ENCODE measurements at regions of chr5 and their contacts with region 1.

Region 1: GRCh38 chr5:75006865-75007822 is 45.2 kb downstream of the GCNT4 start:
- DNase-seq: peak; percentile 81
- ATAC-seq: peak; percentile 96
- H3K4me3 ChIP-seq: no peak overlapping the region
- H3K27ac ChIP-seq: peak overlapping the region; percentile 94
- H3K4me1 ChIP-seq: peaks cover 8% of the 10 kb centered on the region; the same call in 1 of the 2 replicates
- H3K27me3 ChIP-seq: no peaks in the 10 kb centered on the region
- CTCF ChIP-seq: no peak
- POLR2A ChIP-seq: no peak
- RAD21 ChIP-seq: no peak

Region 2: DNA sequence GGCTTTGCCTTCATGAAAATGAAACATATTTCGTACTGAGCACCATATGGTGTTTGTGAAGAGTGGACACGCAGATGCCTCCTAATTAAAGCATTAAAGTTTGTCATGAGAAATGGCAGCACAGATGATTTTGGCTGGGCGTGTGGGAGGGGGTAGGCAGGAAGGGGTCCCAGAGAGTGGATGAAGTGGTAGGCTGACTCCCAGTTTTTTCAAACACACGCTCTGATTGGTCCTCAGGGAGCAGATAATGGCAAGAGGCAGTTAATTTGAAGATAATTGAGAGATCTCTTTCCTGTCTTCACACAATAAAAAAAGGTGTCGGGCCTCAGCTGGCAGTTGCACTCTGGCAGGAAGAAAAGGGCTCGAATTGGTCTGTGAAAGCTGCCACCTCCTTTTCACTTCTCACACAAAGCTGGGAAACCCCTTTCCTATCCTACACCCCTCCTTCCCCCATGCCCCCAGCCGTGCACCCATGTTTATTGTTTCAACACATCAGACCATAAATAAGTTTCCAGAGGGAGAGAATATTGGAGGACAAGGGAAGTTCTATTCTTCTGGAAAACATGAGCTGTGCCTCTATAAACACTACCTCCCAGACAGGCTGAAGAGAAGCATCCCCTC is 951.5 kb before region 1 on chr5:
- CTCF ChIA-PET with region 1: no interaction called
- POLR2A ChIA-PET with region 1: no interaction called
- dilution Hi-C with region 1: no loop called
- in situ Hi-C with region 1: no loop called
- intact Hi-C with region 1: no loop called
- DNase-seq: no peak
- ATAC-seq: no peak
- H3K4me3 ChIP-seq: no peak overlapping the region
- H3K27ac ChIP-seq: no peak overlapping the region
- H3K4me1 ChIP-seq: 0 out of 2 replicates have a peak, but pooled peaks cover 2% of the 10 kb centered on the region
- H3K27me3 ChIP-seq: peaks cover 6% of the 10 kb centered on the region
- CTCF ChIP-seq: no peak
- POLR2A ChIP-seq: no peak
- RAD21 ChIP-seq: no peak

Region 3: GRCh38 chr5:74953940-74954720 is 53.0 kb before region 1 on chr5:
- CTCF ChIA-PET with region 1: interaction called, 7 read pairs
- POLR2A ChIA-PET with region 1: no interaction called
- dilution Hi-C with region 1: no loop called
- in situ Hi-C with region 1: no loop called
- intact Hi-C with region 1: loop called (anchors 2 kb)
- DNase-seq: peak; percentile 77
- ATAC-seq: peak; percentile 48
- H3K4me3 ChIP-seq: no peak overlapping the region
- H3K27ac ChIP-seq: peak overlapping the region; percentile 95
- H3K4me1 ChIP-seq: peaks cover 23% of the 10 kb centered on the region
- H3K27me3 ChIP-seq: no peaks in the 10 kb centered on the region
- CTCF ChIP-seq: no peak
- POLR2A ChIP-seq: no peak
- RAD21 ChIP-seq: no peak

Region 4: GRCh38 chr5:75185763-75186162 is 178.6 kb after region 1 on chr5:
- CTCF ChIA-PET with region 1: no interaction called
- POLR2A ChIA-PET with region 1: no interaction called
- dilution Hi-C with region 1: no loop called
- in situ Hi-C with region 1: no loop called
- intact Hi-C with region 1: no loop called
- DNase-seq: no peak
- ATAC-seq: no peak
- H3K4me3 ChIP-seq: no peak overlapping the region
- H3K27ac ChIP-seq: no peak overlapping the region
- H3K4me1 ChIP-seq: no peaks in the 10 kb centered on the region
- H3K27me3 ChIP-seq: no peaks in the 10 kb centered on the region
- CTCF ChIP-seq: no peak
- POLR2A ChIP-seq: no peak
- RAD21 ChIP-seq: no peak